MCF 10A (cell line): ENCODE measurements at regions of chr6 and their contacts with region 1.

Region 1: GRCh38 chr6:31441365-31442267 is 38.2 kb downstream of the MICA start:
- DNase-seq: peak; percentile 72
- H3K4me3 Mint-ChIP-seq: peak overlapping the region; percentile 4
- H3K27ac Mint-ChIP-seq: no peak overlapping the region
- H3K4me1 Mint-ChIP-seq: no peaks in the 10 kb centered on the region
- H3K27me3 Mint-ChIP-seq: peaks cover 45% of the 10 kb centered on the region
- CTCF ChIP-seq: peak; percentile 82

Region 2: DNA sequence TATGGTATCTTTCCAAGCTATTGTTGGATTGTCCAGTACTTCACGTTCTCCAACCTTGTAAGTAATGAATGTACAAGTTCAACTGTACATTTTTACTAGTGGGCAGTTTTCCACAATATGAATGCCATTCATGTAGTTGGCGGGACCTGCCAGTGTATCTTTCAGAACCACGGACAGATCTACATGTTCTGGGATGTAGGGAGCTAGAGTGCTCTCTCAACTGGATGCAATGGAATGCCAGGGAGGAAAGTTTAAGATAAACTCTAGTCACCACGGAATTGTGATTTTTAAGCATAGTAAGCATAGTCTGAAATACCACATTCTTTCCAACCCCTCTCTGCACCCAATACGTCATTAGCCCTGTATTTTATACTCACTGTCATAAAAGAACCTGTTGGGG is 148.3 kb before region 1 on chr6:
- CTCF ChIA-PET with region 1: no interaction called
- POLR2A ChIA-PET with region 1: no interaction called
- intact Hi-C with region 1: no loop called
- DNase-seq: peak; percentile 67
- H3K4me3 Mint-ChIP-seq: no peak overlapping the region
- H3K27ac Mint-ChIP-seq: no peak overlapping the region
- H3K4me1 Mint-ChIP-seq: no peaks in the 10 kb centered on the region
- H3K27me3 Mint-ChIP-seq: peaks cover 97% of the 10 kb centered on the region
- CTCF ChIP-seq: no peak

Region 3: GRCh38 chr6:31399589-31400466 is 41.8 kb before region 1 on chr6:
- CTCF ChIA-PET with region 1: interaction called, 17 read pairs
- POLR2A ChIA-PET with region 1: interaction called, 15 read pairs
- intact Hi-C with region 1: loop called (anchors 1 kb)
- DNase-seq: peak; percentile 93
- H3K4me3 Mint-ChIP-seq: peak overlapping the region; percentile 73
- H3K27ac Mint-ChIP-seq: peak overlapping the region; percentile 83
- H3K4me1 Mint-ChIP-seq: peaks cover 24% of the 10 kb centered on the region
- H3K27me3 Mint-ChIP-seq: no peaks in the 10 kb centered on the region
- CTCF ChIP-seq: peak; percentile 93

Region 4: GRCh38 chr6:31430449-31430848 is 11.2 kb before region 1 on chr6:
- CTCF ChIA-PET with region 1: interaction called, 18 read pairs
- POLR2A ChIA-PET with region 1: interaction called, 3 read pairs
- intact Hi-C with region 1: no loop called
- DNase-seq: no peak
- H3K4me3 Mint-ChIP-seq: no peak overlapping the region
- H3K27ac Mint-ChIP-seq: no peak overlapping the region
- H3K4me1 Mint-ChIP-seq: no peaks in the 10 kb centered on the region
- H3K27me3 Mint-ChIP-seq: peaks cover 18% of the 10 kb centered on the region
- CTCF ChIP-seq: no peak

Region 5: GRCh38 chr6:31453259-31453658 is 11.6 kb after region 1 on chr6:
- CTCF ChIA-PET with region 1: interaction called, 13 read pairs
- POLR2A ChIA-PET with region 1: no interaction called
- intact Hi-C with region 1: no loop called
- DNase-seq: peak; percentile 54
- H3K4me3 Mint-ChIP-seq: no peak overlapping the region
- H3K27ac Mint-ChIP-seq: no peak overlapping the region
- H3K4me1 Mint-ChIP-seq: peaks cover 6% of the 10 kb centered on the region
- H3K27me3 Mint-ChIP-seq: peaks cover 56% of the 10 kb centered on the region
- CTCF ChIP-seq: no peak